ENCODE measurements at regions of chr2 and their contacts with region 1.

Region 1: GRCh38 chr2:155368934-155369333 is 670.4 kb downstream of the KCNJ3 start:
- DNase-seq: peak; percentile 24
- H3K4me3 ChIP-seq: no peak overlapping the region
- H3K27ac ChIP-seq: no peak overlapping the region
- H3K4me1 ChIP-seq: no peaks in the 10 kb centered on the region
- H3K27me3 ChIP-seq: no peaks in the 10 kb centered on the region
- CTCF ChIP-seq: no peak
- POLR2A ChIP-seq: no peak

Region 2: DNA sequence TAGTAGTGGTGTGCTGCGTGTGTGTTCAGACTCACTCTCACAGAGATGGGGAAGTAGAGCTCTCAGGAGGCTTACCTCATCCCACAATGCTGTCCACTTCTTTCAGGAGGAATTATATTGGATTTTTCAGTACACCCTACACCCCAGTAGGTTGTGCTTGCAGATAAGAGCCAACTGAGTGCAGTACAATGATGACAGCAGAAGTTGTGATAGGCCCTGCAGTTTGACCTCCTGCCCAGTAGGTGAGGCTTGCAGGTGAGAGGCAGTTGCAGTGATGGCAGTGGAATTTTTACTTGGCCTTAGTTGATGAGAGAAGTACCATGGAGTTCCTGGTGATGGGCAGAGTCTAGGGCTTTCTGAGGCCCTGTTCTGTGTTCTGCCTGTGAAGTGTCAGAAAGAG is 12.7 kb before region 1 on chr2:
- CTCF ChIA-PET with region 1: interaction called, 13 read pairs
- POLR2A ChIA-PET with region 1: no interaction called
- dilution Hi-C with region 1: no loop called
- intact Hi-C with region 1: no loop called
- DNase-seq: no peak
- H3K4me3 ChIP-seq: no peak overlapping the region
- H3K27ac ChIP-seq: no peak overlapping the region
- H3K4me1 ChIP-seq: no peaks in the 10 kb centered on the region
- H3K27me3 ChIP-seq: peaks cover 0 to 1% of the 10 kb centered on the region in 2 experiments
- CTCF ChIP-seq: no peak
- POLR2A ChIP-seq: no peak

Region 3: GRCh38 chr2:155645771-155646170 is 276.8 kb after region 1 on chr2:
- CTCF ChIA-PET with region 1: no interaction called
- POLR2A ChIA-PET with region 1: no interaction called
- dilution Hi-C with region 1: no loop called
- intact Hi-C with region 1: no loop called
- DNase-seq: no peak
- H3K4me3 ChIP-seq: no peak overlapping the region
- H3K27ac ChIP-seq: no peak overlapping the region
- H3K4me1 ChIP-seq: no peaks in the 10 kb centered on the region
- H3K27me3 ChIP-seq: no peaks in the 10 kb centered on the region
- CTCF ChIP-seq: no peak
- POLR2A ChIP-seq: no peak

Region 4: GRCh38 chr2:155815886-155816285 is 447.0 kb after region 1 on chr2:
- CTCF ChIA-PET with region 1: interaction called, 26 read pairs
- POLR2A ChIA-PET with region 1: no interaction called
- dilution Hi-C with region 1: no loop called
- intact Hi-C with region 1: loop called (anchors 2 kb)
- DNase-seq: peak; percentile 67
- H3K4me3 ChIP-seq: no peak overlapping the region
- H3K27ac ChIP-seq: no peak overlapping the region
- H3K4me1 ChIP-seq: no peaks in the 10 kb centered on the region
- H3K27me3 ChIP-seq: no peaks in the 10 kb centered on the region
- CTCF ChIP-seq: peak; percentile 45 to 69
- POLR2A ChIP-seq: no peak

Region 5: DNA sequence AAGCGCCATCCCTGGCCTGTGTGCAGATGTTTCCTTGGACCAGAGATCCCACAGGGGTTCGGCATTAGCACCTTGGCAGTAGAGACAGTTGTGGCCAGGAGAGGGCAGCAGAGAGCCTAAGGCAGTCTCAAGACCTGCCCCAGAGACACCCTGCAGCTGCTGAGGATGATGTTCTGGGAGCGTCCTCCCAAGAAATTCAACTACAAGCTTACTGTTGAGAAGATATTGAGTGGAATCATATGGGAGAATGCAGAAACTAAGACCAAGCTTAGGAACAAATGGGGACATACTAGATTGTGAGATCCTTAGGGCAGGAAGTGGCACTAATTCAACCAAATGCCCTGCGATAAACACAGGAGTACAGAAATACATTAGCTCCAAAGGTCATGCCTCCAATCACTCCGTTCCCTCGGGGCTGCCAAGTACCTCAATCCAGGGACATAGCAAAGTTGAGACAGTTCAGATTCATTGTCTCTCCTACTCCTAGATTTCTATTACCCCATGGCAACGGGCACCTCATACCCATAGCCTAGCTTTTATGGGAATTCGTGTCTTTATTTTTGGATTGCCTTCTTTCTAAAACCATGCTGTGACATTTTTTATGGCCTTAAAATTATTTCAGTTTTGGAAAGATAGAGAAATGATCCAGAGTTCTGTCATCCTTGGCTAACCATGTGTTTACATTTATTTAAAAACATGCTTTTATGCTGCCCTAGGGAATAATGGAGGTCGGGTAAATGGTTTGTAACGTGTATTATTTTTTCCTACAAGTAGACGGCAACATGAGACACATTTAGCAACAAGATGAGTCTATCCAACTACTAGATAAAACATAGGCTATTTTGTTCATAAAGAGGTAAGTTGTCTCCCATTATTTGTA is 1958.9 kb after region 1 on chr2:
- CTCF ChIA-PET with region 1: interaction called, 15 read pairs
- POLR2A ChIA-PET with region 1: no interaction called
- dilution Hi-C with region 1: no loop called
- intact Hi-C with region 1: loop called (anchors 5 kb)
- DNase-seq: peak; percentile 65
- H3K4me3 ChIP-seq: no peak overlapping the region
- H3K27ac ChIP-seq: no peak overlapping the region
- H3K4me1 ChIP-seq: no peaks in the 10 kb centered on the region
- H3K27me3 ChIP-seq: peaks cover 0 to 4% of the 10 kb centered on the region in 2 experiments
- CTCF ChIP-seq: peak; percentile 89 to 94
- POLR2A ChIP-seq: no peak

Measured in endothelial cell of umbilical vein (primary cell).